Endothelial cell of umbilical vein (primary cell): ENCODE measurements at regions of chr4 and their contacts with region 1.

Region 1: GRCh38 chr4:89640620-89641366 is 196.2 kb downstream of the SNCA start:
- DNase-seq: no peak
- H3K4me3 ChIP-seq: no peak overlapping the region
- H3K27ac ChIP-seq: no peak overlapping the region
- H3K4me1 ChIP-seq: no peaks in the 10 kb centered on the region
- H3K27me3 ChIP-seq: no peaks in the 10 kb centered on the region
- CTCF ChIP-seq: peak; percentile 56 to 68
- POLR2A ChIP-seq: no peak

Region 2: DNA sequence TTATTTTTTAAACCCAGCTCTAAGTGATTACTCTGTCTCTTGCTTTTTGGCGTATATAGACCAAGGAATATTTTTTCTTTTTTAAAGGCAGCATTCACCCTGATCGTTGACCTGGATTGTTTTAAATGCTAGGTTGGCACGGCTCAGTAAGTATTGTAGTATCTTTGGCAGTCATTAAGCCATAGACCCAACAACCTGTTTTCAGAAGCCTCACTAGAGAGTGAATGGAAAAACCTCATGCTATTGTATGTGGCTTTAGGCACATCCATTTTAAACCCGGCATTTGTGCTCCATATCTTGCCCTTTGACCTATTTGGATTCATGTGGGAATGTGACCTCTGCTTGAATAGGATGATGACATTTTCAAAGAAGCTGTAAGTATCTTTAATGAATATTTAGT is 12.2 kb after region 1 on chr4:
- CTCF ChIA-PET with region 1: interaction called, 19 read pairs
- POLR2A ChIA-PET with region 1: no interaction called
- dilution Hi-C with region 1: no loop called
- intact Hi-C with region 1: no loop called
- DNase-seq: peak; percentile 71
- H3K4me3 ChIP-seq: no peak overlapping the region
- H3K27ac ChIP-seq: no peak overlapping the region
- H3K4me1 ChIP-seq: no peaks in the 10 kb centered on the region
- H3K27me3 ChIP-seq: no peaks in the 10 kb centered on the region
- CTCF ChIP-seq: no peak
- POLR2A ChIP-seq: no peak

Region 3: GRCh38 chr4:89657931-89658700 is 17.3 kb after region 1 on chr4:
- CTCF ChIA-PET with region 1: interaction called, 19 read pairs
- POLR2A ChIA-PET with region 1: no interaction called
- dilution Hi-C with region 1: no loop called
- intact Hi-C with region 1: no loop called
- DNase-seq: peak; percentile 82
- H3K4me3 ChIP-seq: no peak overlapping the region
- H3K27ac ChIP-seq: no peak overlapping the region
- H3K4me1 ChIP-seq: peaks cover 9% of the 10 kb centered on the region
- H3K27me3 ChIP-seq: no peaks in the 10 kb centered on the region
- CTCF ChIP-seq: peak; percentile 29 to 34
- POLR2A ChIP-seq: no peak